Sigmoid colon (tissue), 7 donors: ENCODE measurements at regions of chr1 and their contacts with region 1.

Region 1: GRCh38 chr1:37602750-37603694 is 7.3 kb upstream of the GNL2 start:
- DNase-seq: no peak
- H3K4me3 ChIP-seq: no peak overlapping the region
- H3K27ac ChIP-seq: no peak overlapping the region
- H3K4me1 ChIP-seq: peaks cover 0 to 29% (median 21%) of the 10 kb centered on the region in 4 donors
- H3K27me3 ChIP-seq: no peaks in the 10 kb centered on the region
- CTCF ChIP-seq: peak in 3 of 4 experiments; percentile 19 to 66 (median 64)
- EP300 ChIP-seq: no peak
- POLR2A ChIP-seq: no peak

Region 2: DNA sequence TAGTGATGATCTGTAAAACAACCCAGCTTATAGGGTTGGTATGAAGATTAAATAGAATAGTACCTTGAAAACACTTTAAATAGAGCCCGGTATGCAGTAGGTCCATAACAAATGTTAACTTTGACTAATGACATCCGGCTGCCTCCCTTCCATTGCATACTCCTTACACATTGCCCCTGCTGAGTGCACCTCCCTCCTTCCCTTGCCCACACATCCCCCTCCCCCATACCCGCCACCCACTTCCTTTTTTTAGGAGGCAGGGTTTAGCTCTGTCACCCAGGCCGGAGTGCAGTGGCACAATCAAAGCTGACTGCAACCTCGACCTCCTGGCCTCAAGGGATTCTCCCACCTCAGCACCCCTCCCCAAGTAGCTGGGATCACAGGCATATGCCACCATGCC is 153.1 kb before region 1 on chr1:
- intact Hi-C with region 1: no loop called
- DNase-seq: no peak
- H3K4me3 ChIP-seq: no peak overlapping the region
- H3K27ac ChIP-seq: no peak overlapping the region
- H3K4me1 ChIP-seq: peaks cover under 1 to 5% (median 3%) of the 10 kb centered on the region in 4 donors
- H3K27me3 ChIP-seq: peaks cover 0 to 65% (median 27%) of the 10 kb centered on the region in 3 donors
- CTCF ChIP-seq: no peak
- EP300 ChIP-seq: no peak
- POLR2A ChIP-seq: no peak

Region 3: DNA sequence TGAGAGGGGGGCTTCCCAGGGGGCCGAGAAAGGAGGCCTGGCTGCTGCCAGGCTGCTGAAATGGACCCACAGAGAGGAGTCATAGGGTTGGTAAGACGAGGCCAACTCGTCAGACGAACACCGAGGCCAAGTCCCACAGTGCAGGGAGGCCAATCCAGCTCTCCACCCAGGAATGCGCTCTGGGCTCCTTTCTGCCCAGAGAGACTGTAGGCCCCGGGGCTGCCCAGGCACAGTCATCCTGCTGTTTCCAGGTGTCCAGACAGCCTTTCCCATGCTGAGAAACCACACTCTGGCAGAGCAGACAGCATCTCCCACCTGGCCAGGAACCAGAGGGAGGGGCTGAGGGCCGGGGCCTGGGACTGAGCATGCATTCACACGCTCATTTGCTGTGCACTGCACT is 58.4 kb after region 1 on chr1:
- intact Hi-C with region 1: no loop called
- DNase-seq: no peak
- H3K4me3 ChIP-seq: no peak overlapping the region
- H3K27ac ChIP-seq: no peak overlapping the region
- H3K4me1 ChIP-seq: peaks cover 0 to 3% (median 2%) of the 10 kb centered on the region in 4 donors
- H3K27me3 ChIP-seq: peaks cover 0 to 17% (median 0%) of the 10 kb centered on the region in 3 donors
- CTCF ChIP-seq: no peak
- EP300 ChIP-seq: no peak
- POLR2A ChIP-seq: no peak

Region 4: GRCh38 chr1:37676281-37677243 is 73.5 kb after region 1 on chr1:
- intact Hi-C with region 1: loop called (anchors 2 kb)
- DNase-seq: peak; percentile 83
- H3K4me3 ChIP-seq: no peak overlapping the region
- H3K27ac ChIP-seq: peak overlapping the region in 3 of 4 donors; percentile 42 to 66 (median 64)
- H3K4me1 ChIP-seq: peaks cover 0 to 29% (median 25%) of the 10 kb centered on the region in 4 donors
- H3K27me3 ChIP-seq: peaks cover 0 to 14% (median 4%) of the 10 kb centered on the region in 3 donors
- CTCF ChIP-seq: no peak
- EP300 ChIP-seq: peak in 1 of 4 donors; percentile 9
- POLR2A ChIP-seq: no peak

Region 5: DNA sequence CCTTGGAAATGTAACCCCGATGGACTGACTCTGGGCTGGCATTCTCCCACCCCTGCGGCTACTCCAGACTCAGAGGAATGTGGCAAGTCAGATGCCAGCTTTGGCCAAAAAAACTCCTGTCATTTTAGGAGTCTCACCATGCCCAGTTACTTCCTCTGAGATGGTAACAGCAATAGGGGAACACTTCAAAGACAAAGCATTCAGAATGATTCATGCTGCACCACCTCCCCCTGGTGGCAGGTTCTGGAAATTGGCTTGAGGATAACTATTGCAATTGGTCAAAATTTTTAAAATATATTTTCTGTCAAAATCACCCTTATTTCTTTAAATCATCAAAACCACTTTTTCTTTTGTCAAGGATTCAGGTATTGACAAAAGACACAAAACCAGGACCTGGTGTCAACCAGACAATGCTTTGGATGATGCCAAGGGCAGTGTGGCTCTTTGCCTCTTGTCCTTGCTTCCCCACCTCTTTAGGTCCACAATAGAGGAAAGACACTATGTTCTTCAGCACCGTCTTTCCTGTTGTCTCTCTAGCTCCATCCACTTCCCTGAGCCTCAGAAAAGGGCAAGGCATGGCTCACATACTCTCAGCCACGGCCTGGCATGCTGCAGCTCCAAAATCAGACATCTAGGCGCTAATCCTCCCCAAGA is 79.4 kb after region 1 on chr1:
- intact Hi-C with region 1: loop called (anchors 1 kb)
- DNase-seq: peak; percentile 81
- H3K4me3 ChIP-seq: no peak overlapping the region
- H3K27ac ChIP-seq: no peak overlapping the region
- H3K4me1 ChIP-seq: peaks cover 0 to 8% (median 1%) of the 10 kb centered on the region in 4 donors
- H3K27me3 ChIP-seq: no peaks in the 10 kb centered on the region
- CTCF ChIP-seq: peak; percentile 56 to 82 (median 80)
- EP300 ChIP-seq: no peak
- POLR2A ChIP-seq: no peak

Region 6: DNA sequence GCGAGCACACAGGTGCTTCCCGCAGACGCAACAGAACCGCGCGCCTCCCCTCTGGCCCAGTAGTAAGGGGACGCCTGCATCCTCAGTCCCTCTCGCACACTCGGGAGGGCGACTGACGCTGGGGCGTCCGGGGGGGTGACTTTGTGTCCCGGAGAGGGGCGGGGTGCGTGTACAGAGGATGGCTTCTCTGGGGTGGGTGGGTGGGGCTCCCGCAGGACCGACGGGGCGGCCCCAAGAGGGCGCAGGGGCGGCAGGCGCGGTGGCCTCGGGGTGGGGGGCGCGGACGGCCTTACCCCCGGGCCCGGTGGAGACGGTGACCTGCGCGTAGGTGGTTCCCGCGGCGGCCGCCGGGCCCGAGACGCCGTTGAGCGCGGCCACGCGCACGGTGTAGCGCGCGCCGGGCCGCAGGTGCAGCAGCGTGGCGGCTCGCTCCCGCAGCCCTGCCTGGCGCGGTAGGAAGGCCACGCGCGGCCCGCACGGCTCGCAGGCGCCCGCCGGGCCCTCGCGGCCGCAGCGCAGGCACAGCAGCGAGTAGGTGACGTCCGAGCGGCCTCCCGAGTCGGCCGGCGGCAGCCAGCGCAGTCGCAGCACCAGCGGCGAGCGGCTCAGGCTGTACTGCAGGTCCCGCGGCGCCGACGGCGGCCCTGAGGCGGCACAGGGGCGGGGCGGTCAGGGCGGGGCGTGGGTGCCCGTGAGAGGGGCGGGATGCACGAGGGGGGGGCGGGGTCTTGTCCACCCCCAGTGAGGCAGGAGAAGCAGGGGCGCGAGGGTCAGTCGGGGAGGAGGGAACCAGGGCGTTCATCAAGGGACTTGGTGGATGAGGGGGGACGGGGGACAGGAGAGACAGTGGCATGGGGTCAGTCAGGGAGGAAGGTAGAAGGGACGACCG is 149.8 kb after region 1 on chr1:
- intact Hi-C with region 1: no loop called
- DNase-seq: no peak
- H3K4me3 ChIP-seq: peak overlapping the region in 3 of 4 donors; percentile 33 to 36 (median 35)
- H3K27ac ChIP-seq: no peak overlapping the region
- H3K4me1 ChIP-seq: peaks cover 0 to 11% (median 6%) of the 10 kb centered on the region in 4 donors
- H3K27me3 ChIP-seq: peaks cover 19 to 92% (median 42%) of the 10 kb centered on the region in 3 donors
- CTCF ChIP-seq: no peak
- EP300 ChIP-seq: no peak
- POLR2A ChIP-seq: no peak